ENCODE measurements at regions of chr19 and their contacts with region 1.

Region 1: DNA sequence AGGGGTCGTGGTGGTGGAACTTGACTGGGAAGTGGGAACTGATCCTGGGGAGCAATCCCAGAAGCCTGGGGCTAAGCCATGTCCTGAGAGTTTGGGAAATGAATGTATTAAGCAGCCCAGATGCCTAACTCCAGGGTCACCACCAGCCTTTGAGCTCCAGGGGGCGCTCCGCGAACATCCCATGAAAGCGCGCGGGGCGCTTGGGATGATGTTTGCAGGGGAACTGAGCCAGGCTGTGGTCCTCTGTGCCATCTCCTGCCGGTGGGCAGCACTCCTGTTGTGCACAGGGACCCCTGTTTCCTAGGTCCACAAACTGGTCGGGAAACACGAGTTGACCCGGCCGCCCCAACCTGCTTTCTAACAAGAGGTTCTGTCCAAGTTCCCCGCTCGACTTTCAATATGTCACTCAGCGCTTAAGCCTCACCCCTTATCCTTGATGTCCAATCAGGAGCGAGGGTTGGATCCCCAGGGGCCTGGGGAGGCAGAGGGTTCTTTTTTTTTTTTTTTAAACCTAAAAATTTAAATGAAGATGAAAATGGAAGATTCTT is 14.4 kb downstream of the LEUTX start:
- DNase-seq: peak; percentile 100
- ATAC-seq: peak; percentile 98
- H3K4me3 ChIP-seq: peak overlapping the region; percentile 29 to 42
- H3K27ac ChIP-seq: no peak overlapping the region
- H3K4me1 ChIP-seq: peaks cover 13% of the 10 kb centered on the region
- H3K27me3 ChIP-seq: peaks cover 29% of the 10 kb centered on the region
- CTCF ChIP-seq: no peak

Region 2: GRCh38 chr19:38964738-38965137 is 828.3 kb before region 1 on chr19:
- CTCF ChIA-PET with region 1: interaction called, 13 read pairs
- POLR2A ChIA-PET with region 1: no interaction called
- in situ Hi-C with region 1: no loop called
- intact Hi-C with region 1: loop called (anchors 1 kb)
- DNase-seq: no peak
- ATAC-seq: no peak
- H3K4me3 ChIP-seq: no peak overlapping the region
- H3K27ac ChIP-seq: no peak overlapping the region
- H3K4me1 ChIP-seq: peaks cover 7% of the 10 kb centered on the region
- H3K27me3 ChIP-seq: no peaks in the 10 kb centered on the region
- CTCF ChIP-seq: no peak

Region 3: DNA sequence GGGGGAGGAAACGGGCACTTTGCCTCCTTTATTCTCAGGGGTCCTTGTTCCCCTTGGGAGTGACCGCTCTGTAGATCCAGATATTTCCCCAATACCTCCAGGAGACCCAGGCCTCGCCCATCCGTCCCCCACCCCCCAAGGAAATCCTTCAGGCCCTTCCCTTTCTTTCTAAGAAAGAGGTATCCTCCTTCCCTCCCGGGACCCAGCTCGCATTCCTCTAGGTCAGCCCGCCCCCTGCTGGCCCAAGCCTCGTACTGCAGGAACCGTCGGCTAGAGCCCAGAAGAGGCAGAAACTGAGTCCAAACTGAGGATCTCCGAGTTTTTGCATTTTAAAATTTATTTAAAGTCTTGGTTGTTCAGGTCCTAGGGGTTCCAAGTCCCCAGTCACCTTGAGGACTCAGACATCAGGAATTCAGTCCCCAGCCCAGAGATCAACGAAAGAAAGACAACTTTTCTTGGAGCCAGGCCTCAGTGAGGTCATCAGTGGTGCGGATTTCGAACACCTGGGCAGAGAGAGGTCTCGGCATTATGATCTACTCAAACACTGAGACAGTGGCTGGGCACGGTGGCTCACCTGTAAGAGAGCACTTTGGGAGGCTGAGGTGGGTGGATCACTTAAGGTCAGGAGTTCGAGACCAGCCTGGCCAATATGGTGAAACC is 464.9 kb before region 1 on chr19:
- CTCF ChIA-PET with region 1: interaction called, 34 read pairs
- POLR2A ChIA-PET with region 1: interaction called, 5 read pairs
- in situ Hi-C with region 1: no loop called
- intact Hi-C with region 1: loop called (anchors 1 kb)
- DNase-seq: peak; percentile 97
- ATAC-seq: peak; percentile 84
- H3K4me3 ChIP-seq: no peak overlapping the region
- H3K27ac ChIP-seq: peak overlapping the region; percentile 2
- H3K4me1 ChIP-seq: peaks cover 7% of the 10 kb centered on the region; the same call in 1 of the 2 replicates
- H3K27me3 ChIP-seq: no peaks in the 10 kb centered on the region
- CTCF ChIP-seq: no peak

Region 4: GRCh38 chr19:39613597-39613996 is 179.5 kb before region 1 on chr19:
- CTCF ChIA-PET with region 1: no interaction called
- POLR2A ChIA-PET with region 1: no interaction called
- in situ Hi-C with region 1: no loop called
- intact Hi-C with region 1: no loop called
- DNase-seq: no peak
- ATAC-seq: no peak
- H3K4me3 ChIP-seq: no peak overlapping the region
- H3K27ac ChIP-seq: no peak overlapping the region
- H3K4me1 ChIP-seq: no peaks in the 10 kb centered on the region
- H3K27me3 ChIP-seq: peaks cover 48% of the 10 kb centered on the region
- CTCF ChIP-seq: no peak

Region 5: GRCh38 chr19:39778763-39779162 is 14.3 kb before region 1 on chr19 and contains the start of gene LEUTX:
- CTCF ChIA-PET with region 1: interaction called, 207 read pairs
- POLR2A ChIA-PET with region 1: interaction called, 6 read pairs
- in situ Hi-C with region 1: no loop called
- intact Hi-C with region 1: no loop called
- DNase-seq: no peak
- ATAC-seq: no peak
- H3K4me3 ChIP-seq: no peak within 1 kb of the TSS
- H3K27ac ChIP-seq: no peak within 1 kb of the TSS
- H3K4me1 ChIP-seq: no peaks in the 10 kb centered on the region
- H3K27me3 ChIP-seq: peaks cover 86% of the 10 kb centered on the region
- CTCF ChIP-seq: no peak
- total RNA-seq, gene LEUTX: not detected

Region 6: DNA sequence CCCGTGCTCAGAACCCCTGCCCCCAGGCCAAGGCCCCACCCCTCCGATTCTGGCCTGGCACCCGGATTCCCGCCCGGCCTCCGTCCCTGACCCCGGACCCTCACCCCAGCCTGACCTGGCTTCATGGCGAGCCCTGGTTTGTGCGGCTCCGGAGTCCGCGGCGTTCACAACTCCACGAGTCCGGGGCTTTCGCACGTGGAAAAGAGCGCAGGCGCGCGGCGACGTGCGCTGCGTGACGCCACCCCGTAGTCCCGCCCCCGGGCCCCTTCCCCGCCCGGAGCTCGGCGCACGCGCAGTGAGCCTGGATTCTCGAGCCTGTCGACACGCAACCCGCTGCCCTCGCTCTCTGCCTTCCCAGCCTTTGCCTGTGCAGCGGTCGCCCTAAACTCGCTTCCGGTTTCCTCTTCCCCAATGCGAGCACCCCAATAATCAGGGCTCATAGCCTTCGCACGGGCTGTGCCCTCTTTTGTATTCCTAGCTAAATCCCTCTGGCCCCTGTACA is 53.2 kb after region 1 on chr19 and contains the start of gene FBL:
- CTCF ChIA-PET with region 1: interaction called, 357 read pairs
- POLR2A ChIA-PET with region 1: interaction called, 34 read pairs
- in situ Hi-C with region 1: no loop called
- intact Hi-C with region 1: loop called (anchors 1 kb)
- DNase-seq: peak; percentile 100
- ATAC-seq: peak; percentile 91
- H3K4me3 ChIP-seq: peak within 1 kb of the TSS; percentile 35 to 52
- H3K27ac ChIP-seq: peak within 1 kb of the TSS; percentile 83
- H3K4me1 ChIP-seq: peaks cover 60% of the 10 kb centered on the region
- H3K27me3 ChIP-seq: no peaks in the 10 kb centered on the region
- CTCF ChIP-seq: no peak
- total RNA-seq, gene FBL: 4,927 TPM

Region 7: GRCh38 chr19:40070058-40070457 is 277.0 kb after region 1 on chr19:
- CTCF ChIA-PET with region 1: interaction called, 14 read pairs
- POLR2A ChIA-PET with region 1: interaction called, 3 read pairs
- in situ Hi-C with region 1: no loop called
- intact Hi-C with region 1: no loop called
- DNase-seq: no peak
- ATAC-seq: no peak
- H3K4me3 ChIP-seq: no peak overlapping the region
- H3K27ac ChIP-seq: no peak overlapping the region
- H3K4me1 ChIP-seq: no peaks in the 10 kb centered on the region
- H3K27me3 ChIP-seq: no peaks in the 10 kb centered on the region
- CTCF ChIP-seq: no peak

Measured in Panc1 (cell line).